Heart right ventricle (tissue), 16 donors: ENCODE measurements at regions of chr16 and their contacts with region 1.

Region 1: DNA sequence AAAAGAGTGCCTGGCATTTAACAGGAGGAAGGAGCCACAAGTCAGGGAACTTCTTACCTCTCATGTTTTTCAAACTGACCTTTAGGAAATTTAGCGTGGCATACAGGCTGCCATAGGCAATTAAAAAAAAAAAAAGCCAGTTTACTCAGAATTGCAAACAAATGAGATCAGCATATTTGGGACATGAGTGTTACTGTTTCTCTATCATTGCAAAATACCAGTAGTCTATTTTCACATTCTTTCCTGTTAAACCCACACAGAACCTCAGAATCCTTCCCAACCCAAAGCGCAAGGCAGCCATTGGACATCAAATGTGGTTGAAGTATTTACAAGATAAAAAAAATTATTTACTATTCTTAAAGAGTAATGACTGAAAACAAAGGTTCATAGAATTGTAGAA is 366.4 kb upstream of the DYNLRB2 start:
- DNase-seq: no peak
- ATAC-seq: peak in 1 of 8 donors; percentile 15
- H3K4me3 ChIP-seq: no peak overlapping the region
- H3K27ac ChIP-seq: no peak overlapping the region
- H3K4me1 ChIP-seq: no peaks in the 10 kb centered on the region
- H3K27me3 ChIP-seq: peaks cover 0 to 5% (median 3%) of the 10 kb centered on the region in 7 donors
- CTCF ChIP-seq: no peak

Region 2: GRCh38 chr16:80231888-80232287 is 57.5 kb after region 1 on chr16:
- intact Hi-C with region 1: loop called in 1 of 10 experiments (anchors 10 kb)
- DNase-seq: no peak
- ATAC-seq: no peak
- H3K4me3 ChIP-seq: no peak overlapping the region
- H3K27ac ChIP-seq: no peak overlapping the region
- H3K4me1 ChIP-seq: no peaks in the 10 kb centered on the region
- H3K27me3 ChIP-seq: no peaks in the 10 kb centered on the region
- CTCF ChIP-seq: no peak

Region 3: DNA sequence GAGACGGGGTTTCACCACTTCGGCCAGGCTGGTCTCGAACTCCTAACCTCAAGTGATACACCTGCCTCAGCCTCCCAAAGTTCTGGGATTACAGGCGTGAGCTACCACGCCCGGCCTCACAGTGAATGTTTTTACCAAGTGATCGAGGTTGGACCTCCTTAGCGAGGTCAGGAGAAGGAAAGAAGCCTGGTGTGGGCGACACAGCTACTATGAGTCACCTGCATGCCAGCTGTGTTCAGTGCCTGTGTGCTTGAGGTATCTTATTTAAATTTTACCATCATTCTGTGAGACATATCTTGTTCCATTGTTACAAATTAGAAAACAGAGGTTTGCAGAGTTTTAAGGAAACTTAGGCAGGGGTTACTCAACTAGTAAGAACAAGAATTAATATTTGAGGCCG is 191.6 kb after region 1 on chr16:
- intact Hi-C with region 1: no loop called
- DNase-seq: no peak
- ATAC-seq: no peak
- H3K4me3 ChIP-seq: no peak overlapping the region
- H3K27ac ChIP-seq: no peak overlapping the region
- H3K4me1 ChIP-seq: no peaks in the 10 kb centered on the region
- H3K27me3 ChIP-seq: peaks cover 0 to 11% (median 0%) of the 10 kb centered on the region in 7 donors
- CTCF ChIP-seq: no peak